Activated naive CD4-positive, alpha-beta T cell treated with anti-CD3 and anti-CD28 coated beads for 36 hours (primary cell): ENCODE measurements at regions of chr11 and their contacts with region 1.

Region 1: DNA sequence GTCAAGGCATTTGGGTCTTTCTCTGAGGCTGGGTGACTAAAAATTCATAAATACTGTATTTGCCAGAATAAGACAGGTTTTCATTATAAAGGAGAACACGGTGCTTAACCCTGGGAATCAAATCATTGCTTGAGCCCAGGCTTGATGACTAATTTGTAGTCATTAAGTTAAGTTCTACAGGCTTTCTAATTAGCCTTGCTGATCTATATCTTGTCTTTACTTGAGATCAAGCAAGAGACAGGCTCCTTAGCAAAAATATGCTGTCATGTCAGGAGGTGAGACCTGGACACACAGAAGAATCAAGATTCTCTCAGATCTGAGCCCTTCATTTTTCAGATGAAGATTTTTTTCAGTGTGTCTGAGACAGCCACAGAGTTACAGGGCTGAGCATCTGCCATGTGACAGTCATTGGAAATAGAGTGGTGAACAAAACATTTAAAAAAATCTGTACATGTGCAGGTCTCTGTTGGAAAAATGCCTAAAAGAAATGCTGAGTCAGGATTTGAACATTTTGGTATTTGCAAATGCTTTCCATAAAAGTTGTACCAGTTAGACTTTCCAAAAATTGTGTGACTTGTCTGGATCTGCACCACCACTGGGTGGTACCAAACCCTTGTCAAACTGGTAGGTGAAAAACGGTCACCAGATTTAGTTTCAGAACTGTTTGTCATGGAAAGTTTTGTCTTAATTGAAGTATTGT is 14.6 kb downstream of the ACAT1 start:
- DNase-seq: peak; percentile 68
- H3K4me3 Mint-ChIP-seq: no peak overlapping the region
- H3K27ac Mint-ChIP-seq: peak overlapping the region; percentile 74
- H3K4me1 Mint-ChIP-seq: peaks cover 25% of the 10 kb centered on the region
- H3K27me3 Mint-ChIP-seq: no peaks in the 10 kb centered on the region

Region 2: DNA sequence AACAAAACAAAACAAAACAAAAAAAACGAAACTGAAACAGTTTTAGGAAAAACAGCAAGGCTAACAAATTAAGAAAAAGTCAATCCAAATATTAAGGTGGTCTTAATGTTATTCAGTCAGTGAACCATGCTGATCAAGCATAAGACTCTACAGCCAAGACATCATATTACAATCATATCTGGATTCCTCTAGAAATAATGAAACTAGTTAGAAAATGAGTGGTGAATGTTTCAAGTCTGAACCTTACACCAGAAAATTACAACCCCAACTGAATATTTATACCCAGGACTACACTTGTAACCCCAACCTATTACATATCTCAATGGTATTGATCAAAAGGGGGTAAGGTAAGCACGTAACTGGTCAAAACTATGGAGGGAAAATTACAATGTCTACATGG is 34.2 kb after region 1 on chr11:
- CTCF ChIA-PET with region 1: interaction called, 3 read pairs
- intact Hi-C with region 1: loop called (anchors 1 kb)
- DNase-seq: no peak
- H3K4me3 Mint-ChIP-seq: no peak overlapping the region
- H3K27ac Mint-ChIP-seq: no peak overlapping the region
- H3K4me1 Mint-ChIP-seq: peaks cover 39% of the 10 kb centered on the region
- H3K27me3 Mint-ChIP-seq: no peaks in the 10 kb centered on the region

Region 3: DNA sequence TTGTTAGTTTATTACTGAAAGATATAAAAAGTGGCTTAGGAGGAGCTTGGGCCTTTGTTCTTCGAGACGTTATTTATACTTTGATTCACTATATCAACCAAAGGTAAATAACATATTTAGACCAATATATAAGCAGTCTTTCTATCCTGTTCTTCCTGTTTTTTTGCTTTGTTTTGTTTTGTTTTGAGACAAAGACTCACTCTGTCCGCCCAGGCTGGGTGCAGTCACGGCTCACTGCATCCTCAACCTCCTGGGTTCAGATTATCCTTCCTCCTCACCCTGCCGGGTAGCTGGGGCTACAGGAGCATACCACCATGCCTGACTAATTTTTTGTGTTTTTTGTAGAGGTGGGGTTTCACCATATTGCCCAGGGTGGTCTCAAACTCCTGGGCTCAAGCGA is 153.7 kb after region 1 on chr11:
- CTCF ChIA-PET with region 1: interaction called, 3 read pairs
- intact Hi-C with region 1: loop called (anchors 5 kb)
- DNase-seq: no peak
- H3K4me3 Mint-ChIP-seq: no peak overlapping the region
- H3K27ac Mint-ChIP-seq: no peak overlapping the region
- H3K4me1 Mint-ChIP-seq: peaks cover 35% of the 10 kb centered on the region
- H3K27me3 Mint-ChIP-seq: no peaks in the 10 kb centered on the region

Region 4: GRCh38 chr11:108351458-108351857 is 215.5 kb after region 1 on chr11:
- CTCF ChIA-PET with region 1: no interaction called
- intact Hi-C with region 1: loop called (anchors 1 kb)
- DNase-seq: peak; percentile 30
- H3K4me3 Mint-ChIP-seq: no peak overlapping the region
- H3K27ac Mint-ChIP-seq: no peak overlapping the region
- H3K4me1 Mint-ChIP-seq: peaks cover under 1% of the 10 kb centered on the region
- H3K27me3 Mint-ChIP-seq: no peaks in the 10 kb centered on the region

Region 5: DNA sequence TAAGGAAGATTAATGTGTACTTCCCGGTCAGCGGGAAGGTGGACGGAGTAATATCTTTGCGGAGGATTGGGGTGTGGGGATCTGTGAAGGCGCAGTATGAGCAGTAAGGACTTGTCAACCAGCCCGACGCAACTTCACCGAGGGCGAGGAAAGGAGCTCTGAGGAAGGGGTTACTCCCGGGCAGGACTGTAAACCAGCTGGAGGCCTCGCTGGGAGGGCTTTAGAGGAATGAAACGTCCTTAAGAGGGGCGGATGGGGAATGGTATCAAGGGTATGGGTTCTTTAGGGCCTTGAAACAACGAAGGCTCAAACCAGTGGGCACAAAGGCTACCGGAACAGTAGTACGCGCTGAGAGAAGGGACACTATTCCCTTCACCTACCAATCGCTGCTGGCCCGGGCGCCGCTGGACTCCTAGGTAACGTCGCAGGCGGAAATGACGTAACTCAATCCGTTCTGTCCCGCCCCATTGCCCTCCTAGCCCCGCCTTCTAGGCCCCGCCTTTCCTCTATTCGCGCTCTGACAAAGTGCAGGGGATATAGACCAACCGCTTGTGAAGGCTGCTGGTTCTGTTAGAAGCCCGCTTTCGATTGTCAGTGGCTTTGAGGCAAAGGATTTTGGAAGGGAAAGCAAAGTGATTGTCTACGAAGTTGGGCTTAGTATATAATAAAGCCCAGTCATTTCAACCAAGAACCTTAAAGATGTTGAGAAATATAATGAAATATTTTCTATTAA is 331.3 kb after region 1 on chr11 and contains the start of gene C11orf65:
- CTCF ChIA-PET with region 1: no interaction called
- intact Hi-C with region 1: loop called (anchors 1 kb)
- DNase-seq: peak; percentile 98
- H3K4me3 Mint-ChIP-seq: peak within 1 kb of the TSS; percentile 94
- H3K27ac Mint-ChIP-seq: peak within 1 kb of the TSS; percentile 96
- H3K4me1 Mint-ChIP-seq: peaks cover 8% of the 10 kb centered on the region
- H3K27me3 Mint-ChIP-seq: no peaks in the 10 kb centered on the region
- total RNA-seq, gene C11orf65: 2.2 to 3.1 TPM

Region 6: DNA sequence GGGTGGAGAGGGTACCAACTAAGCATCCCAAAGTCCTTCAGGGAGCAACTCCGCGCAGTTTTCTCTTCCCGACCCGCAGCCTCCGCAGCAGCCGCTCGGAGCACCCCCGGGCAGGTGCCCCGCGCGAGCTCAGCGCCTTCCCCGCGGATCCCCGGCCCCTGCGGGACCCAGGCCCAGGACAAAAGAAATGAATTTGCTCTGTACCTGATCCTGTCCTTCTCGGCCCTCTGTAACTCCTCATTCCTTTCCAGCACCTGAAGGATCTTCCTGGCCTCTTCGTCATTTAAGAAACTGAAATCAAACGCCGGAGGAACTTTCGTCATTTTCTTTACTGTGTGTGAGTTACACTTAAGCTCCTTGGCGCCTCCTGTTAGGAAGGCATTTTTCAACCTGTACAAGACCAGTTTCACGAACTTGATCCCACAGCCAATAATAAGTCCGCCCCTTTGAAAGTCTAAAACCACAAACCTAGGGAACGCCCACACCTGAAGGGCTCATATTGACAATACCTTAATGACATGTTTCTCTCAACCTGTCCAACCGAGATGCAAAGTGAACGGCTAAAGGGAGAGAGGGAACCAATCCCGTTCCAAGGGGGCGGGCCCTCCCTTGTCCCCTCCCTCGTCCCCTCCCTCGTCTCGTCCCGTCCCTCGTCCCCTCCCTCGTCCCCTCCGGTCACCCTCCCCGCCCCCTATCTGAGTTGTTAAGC is 457.4 kb after region 1 on chr11 and contains the start of gene EXPH5:
- CTCF ChIA-PET with region 1: no interaction called
- intact Hi-C with region 1: loop called (anchors 1 kb)
- DNase-seq: peak; percentile 95
- H3K4me3 Mint-ChIP-seq: peak within 1 kb of the TSS; percentile 88
- H3K27ac Mint-ChIP-seq: peak within 1 kb of the TSS; percentile 54
- H3K4me1 Mint-ChIP-seq: peaks cover 13% of the 10 kb centered on the region
- H3K27me3 Mint-ChIP-seq: peaks cover 3% of the 10 kb centered on the region
- total RNA-seq, gene EXPH5: 2.9 to 3.3 TPM

Region 7: GRCh38 chr11:108647701-108648527 is 511.9 kb after region 1 on chr11:
- CTCF ChIA-PET with region 1: no interaction called
- intact Hi-C with region 1: loop called (anchors 1 kb)
- DNase-seq: peak; percentile 86
- H3K4me3 Mint-ChIP-seq: no peak overlapping the region
- H3K27ac Mint-ChIP-seq: no peak overlapping the region
- H3K4me1 Mint-ChIP-seq: no peaks in the 10 kb centered on the region
- H3K27me3 Mint-ChIP-seq: no peaks in the 10 kb centered on the region